ENCODE measurements at regions of chr11 and their contacts with region 1.

Region 1: GRCh38 chr11:61332797-61333549 is at the starts of genes DDB1 and TKFC:
- DNase-seq: peak; percentile 99
- CTCF ChIP-seq: no peak

Region 2: DNA sequence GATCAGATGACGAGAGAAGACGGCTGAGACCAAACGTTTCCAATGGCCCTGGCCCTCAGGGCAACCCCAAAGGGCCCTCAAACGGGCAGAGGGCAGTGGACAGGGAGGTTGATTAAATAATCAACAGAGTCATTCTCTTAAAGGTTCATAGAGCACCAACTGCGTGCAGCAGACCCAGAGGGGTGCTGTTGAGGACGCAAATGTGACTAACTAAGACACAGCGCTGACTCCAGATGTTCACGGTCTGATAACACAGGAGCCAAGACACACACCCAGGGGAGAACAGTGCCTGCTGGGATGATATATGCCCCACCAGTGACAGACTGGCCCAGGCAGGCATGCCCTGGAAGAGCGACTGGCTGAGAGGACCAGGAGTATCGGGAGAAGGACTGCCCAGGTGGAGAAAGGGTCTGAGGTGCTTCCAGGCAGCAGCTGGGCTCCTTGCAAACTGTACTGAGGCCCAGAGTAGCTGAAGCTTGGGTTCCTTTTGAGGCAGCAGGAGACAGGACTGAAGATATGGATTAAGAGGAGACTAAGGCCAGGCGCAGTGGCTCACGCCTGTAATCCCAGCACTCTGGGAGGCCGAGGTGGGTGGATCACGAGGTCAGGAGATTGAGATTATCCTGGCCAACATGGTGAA is 45.5 kb before region 1 on chr11:
- CTCF ChIA-PET with region 1: no interaction called
- POLR2A ChIA-PET with region 1: no interaction called
- DNase-seq: no peak
- CTCF ChIP-seq: no peak

Region 3: GRCh38 chr11:61347916-61348461 is 15.0 kb after region 1 on chr11:
- CTCF ChIA-PET with region 1: interaction called, 374 read pairs
- POLR2A ChIA-PET with region 1: interaction called, 6 read pairs
- DNase-seq: no peak
- CTCF ChIP-seq: no peak

Region 4: GRCh38 chr11:61361686-61362541 is 28.9 kb after region 1 on chr11 and contains the starts of genes CYB561A3 and TMEM138:
- CTCF ChIA-PET with region 1: interaction called, 374 read pairs
- POLR2A ChIA-PET with region 1: interaction called, 8 read pairs
- DNase-seq: peak; percentile 92
- CTCF ChIP-seq: no peak

Region 5: DNA sequence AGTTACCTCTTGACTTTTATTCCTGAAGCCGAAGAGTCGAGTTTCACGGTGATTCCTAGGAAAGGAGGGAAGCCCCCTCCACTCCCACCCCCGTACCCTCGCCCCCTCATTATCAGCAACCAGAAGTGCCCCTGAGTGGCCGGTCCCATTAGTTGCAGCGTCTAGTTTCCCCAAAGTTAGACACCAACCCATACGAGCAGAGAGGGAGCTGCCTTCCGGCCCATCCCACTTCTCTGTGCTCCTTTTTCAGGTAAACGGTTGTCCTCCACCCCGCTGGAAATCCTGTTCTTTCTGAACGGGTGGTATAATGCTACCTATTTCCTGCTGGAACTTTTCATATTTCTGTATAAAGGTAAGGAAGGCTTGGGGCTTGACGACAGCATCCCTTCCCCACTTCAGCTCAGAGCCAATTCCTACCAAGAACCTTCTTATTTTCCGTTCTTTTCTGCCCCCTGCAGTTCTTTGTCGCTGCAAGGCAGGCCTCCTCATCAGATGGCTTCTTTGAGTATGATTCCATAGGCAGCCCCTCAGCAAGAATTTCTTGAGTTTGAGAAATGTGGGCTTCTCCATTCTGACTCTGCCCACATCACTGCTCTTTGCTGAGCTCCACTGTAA is 60.1 kb after region 1 on chr11:
- CTCF ChIA-PET with region 1: interaction called, 501 read pairs
- POLR2A ChIA-PET with region 1: no interaction called
- DNase-seq: peak; percentile 45
- CTCF ChIP-seq: peak; percentile 38

Region 6: DNA sequence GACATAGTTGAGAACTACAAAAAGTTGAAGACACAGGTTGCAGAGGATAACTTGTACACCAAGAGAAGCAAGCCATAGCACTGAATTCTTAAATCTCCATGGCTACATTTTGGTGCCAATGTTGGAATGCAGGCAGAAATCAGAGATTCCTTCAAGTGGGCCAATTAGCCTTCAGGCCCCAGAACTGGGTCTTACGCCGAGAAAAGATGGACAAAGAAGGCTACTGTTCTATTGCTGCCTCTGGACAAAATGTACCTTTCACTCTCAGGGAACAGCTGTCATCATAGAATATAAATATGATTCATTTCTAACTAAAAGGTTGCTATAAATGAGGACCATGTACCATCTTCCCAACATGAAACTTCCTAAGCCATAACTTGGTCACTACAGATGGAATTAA is 73.1 kb after region 1 on chr11:
- CTCF ChIA-PET with region 1: interaction called, 26 read pairs
- POLR2A ChIA-PET with region 1: no interaction called
- DNase-seq: no peak
- CTCF ChIP-seq: no peak

Measured in GM10248 (cell line).